ENCODE measurements at regions of chr13 and their contacts with region 1.

Region 1: DNA sequence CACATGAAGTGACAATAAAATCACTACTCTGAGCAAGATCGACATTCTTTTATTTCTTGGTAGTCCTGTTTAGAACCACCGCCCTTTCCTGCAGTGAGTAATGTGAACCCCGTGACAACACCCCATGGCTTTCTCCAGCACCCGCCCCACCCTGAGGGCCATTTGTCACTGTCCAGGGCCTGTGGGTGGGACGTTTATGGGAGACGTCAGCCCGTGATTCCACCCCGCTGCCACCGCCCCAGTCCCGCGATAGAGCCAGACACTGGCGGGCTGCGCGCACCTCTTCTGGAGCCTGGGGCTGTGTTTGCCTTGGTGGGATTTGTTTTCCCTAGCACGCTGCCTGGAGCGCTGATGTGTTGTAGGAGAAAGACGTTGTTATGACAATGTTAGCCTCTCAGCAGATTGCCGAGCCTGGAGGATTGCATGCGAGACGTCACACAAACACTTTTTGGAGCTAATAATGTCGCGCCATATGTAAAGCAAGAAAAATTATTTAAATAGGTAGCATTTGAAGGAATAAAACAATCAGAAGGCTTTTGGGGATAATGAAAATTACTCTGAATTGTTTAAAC is 263.7 kb downstream of the TEX29 start:
- DNase-seq: no peak
- H3K4me3 ChIP-seq: no peak overlapping the region
- CTCF ChIP-seq: no peak

Region 2: DNA sequence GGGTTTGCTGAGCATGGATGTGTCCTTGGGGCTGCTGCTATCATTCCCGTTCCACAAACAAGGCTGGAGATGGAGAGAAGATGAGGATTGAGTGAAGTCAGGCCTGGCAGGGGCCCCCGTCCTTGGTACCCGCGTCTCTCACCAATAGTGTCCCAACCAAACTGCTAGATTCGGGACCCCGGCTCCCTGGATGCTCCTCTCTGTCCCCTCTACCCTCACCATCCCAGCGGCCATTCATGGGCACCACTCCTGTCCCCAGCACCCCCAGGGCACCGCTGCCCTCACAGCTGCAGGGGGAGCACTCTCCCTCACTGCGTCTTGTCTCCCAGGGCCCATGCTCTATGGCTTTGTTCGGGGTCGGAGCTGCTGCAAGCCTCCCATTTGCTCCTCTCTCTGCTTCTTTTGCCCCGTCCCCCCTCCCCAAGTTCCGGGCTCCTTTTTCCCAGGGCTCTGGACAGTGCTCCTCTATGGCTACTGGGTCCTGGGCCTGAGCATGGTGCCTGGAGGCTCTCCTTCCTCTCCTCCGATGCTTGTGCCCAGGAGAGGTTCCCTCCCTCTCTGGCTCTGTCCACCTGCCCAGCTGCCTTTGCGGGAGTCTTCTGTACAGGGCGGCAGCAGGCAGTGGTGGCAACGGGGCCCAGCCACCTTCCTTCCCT is 44.3 kb before region 1 on chr13:
- in situ Hi-C with region 1: loop called (anchors 5 kb)
- DNase-seq: no peak
- H3K4me3 ChIP-seq: no peak overlapping the region
- CTCF ChIP-seq: no peak

Region 3: DNA sequence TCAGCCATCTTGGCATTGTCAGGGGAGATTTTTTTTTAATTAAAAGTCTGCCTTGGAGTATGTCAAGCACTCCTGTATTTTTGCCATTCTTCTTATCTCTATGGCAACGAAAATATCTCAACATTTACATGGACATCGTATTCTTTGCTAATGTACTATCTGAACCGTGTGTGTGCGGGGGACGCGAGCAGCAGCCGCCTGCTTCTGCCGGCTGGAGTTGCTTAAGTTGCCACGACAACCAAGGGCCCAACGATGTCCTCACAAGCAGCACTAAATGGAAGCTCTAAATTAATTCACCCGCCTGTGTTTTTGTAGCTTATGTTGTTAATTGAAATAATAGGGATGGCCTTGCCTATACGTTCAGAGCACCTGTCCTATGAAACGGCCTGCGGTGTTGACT is 45.7 kb after region 1 on chr13:
- in situ Hi-C with region 1: loop called (anchors 5 kb)
- DNase-seq: no peak
- H3K4me3 ChIP-seq: no peak overlapping the region
- CTCF ChIP-seq: no peak

Measured in astrocyte of the cerebellum (primary cell).